GM12878 (cell line): ENCODE measurements at regions of chr3 and their contacts with region 1.

Region 1: GRCh38 chr3:88113311-88114162 is 36.2 kb upstream of the C3orf38 start:
- DNase-seq: peak; percentile 35
- ATAC-seq: peak; percentile 99
- H3K4me3 ChIP-seq: no peak overlapping the region
- H3K27ac ChIP-seq: no peak overlapping the region
- H3K4me1 ChIP-seq: no peaks in the 10 kb centered on the region
- H3K27me3 ChIP-seq: no peaks in the 10 kb centered on the region
- CTCF ChIP-seq: peak; percentile 67 to 72 (median 69)
- EP300 ChIP-seq: no peak
- POLR2A ChIP-seq: no peak
- RAD21 ChIP-seq: peak; percentile 77

Region 2: DNA sequence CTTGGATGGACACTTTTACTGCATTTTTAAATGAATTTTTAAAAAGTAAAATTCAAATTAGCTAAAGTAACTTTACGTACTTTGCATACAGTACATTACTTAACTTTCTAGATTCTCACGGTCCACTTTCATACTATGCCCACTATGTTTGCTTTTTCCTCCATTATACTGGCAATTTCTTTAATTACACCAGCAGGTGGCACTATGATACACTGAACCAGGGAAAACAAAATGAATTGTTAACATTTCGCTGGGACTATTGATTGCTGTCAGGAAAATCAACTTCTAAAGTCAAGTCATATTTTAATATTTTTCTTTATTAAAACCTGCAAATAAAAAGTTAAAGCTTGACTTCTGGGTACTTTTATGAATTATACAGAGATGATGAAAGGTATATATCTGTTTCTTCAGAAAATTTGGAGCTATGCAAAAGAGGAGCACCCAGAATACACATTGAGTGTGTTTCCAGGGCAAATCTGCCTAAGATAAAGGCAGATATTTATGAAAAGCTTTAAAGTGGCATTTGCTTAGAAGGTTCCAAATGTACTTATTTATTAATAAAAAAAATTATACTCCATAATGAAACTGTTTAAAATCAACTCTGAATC is 815.3 kb before region 1 on chr3:
- CTCF ChIA-PET with region 1: interaction called, 12 read pairs
- POLR2A ChIA-PET with region 1: no interaction called
- RAD21 ChIA-PET with region 1: no interaction called
- SMC1A ChIA-PET with region 1: interaction called, 3 read pairs
- in situ Hi-C with region 1: no loop called
- intact Hi-C with region 1: loop called (anchors 5 kb)
- DNase-seq: no peak
- ATAC-seq: peak; percentile 88
- H3K4me3 ChIP-seq: no peak overlapping the region
- H3K27ac ChIP-seq: no peak overlapping the region
- H3K4me1 ChIP-seq: no peaks in the 10 kb centered on the region
- H3K27me3 ChIP-seq: no peaks in the 10 kb centered on the region
- CTCF ChIP-seq: peak; percentile 52 to 59 (median 58); a peak in 5 of 6 replicates
- EP300 ChIP-seq: no peak
- POLR2A ChIP-seq: no peak
- RAD21 ChIP-seq: peak; percentile 67

Region 3: GRCh38 chr3:87855616-87856015 is 257.9 kb before region 1 on chr3:
- CTCF ChIA-PET with region 1: no interaction called
- POLR2A ChIA-PET with region 1: no interaction called
- RAD21 ChIA-PET with region 1: no interaction called
- SMC1A ChIA-PET with region 1: no interaction called
- in situ Hi-C with region 1: no loop called
- intact Hi-C with region 1: no loop called
- DNase-seq: no peak
- ATAC-seq: no peak
- H3K4me3 ChIP-seq: no peak overlapping the region
- H3K27ac ChIP-seq: no peak overlapping the region
- H3K4me1 ChIP-seq: no peaks in the 10 kb centered on the region
- H3K27me3 ChIP-seq: no peaks in the 10 kb centered on the region
- CTCF ChIP-seq: no peak
- EP300 ChIP-seq: no peak
- POLR2A ChIP-seq: no peak
- RAD21 ChIP-seq: no peak

Region 4: DNA sequence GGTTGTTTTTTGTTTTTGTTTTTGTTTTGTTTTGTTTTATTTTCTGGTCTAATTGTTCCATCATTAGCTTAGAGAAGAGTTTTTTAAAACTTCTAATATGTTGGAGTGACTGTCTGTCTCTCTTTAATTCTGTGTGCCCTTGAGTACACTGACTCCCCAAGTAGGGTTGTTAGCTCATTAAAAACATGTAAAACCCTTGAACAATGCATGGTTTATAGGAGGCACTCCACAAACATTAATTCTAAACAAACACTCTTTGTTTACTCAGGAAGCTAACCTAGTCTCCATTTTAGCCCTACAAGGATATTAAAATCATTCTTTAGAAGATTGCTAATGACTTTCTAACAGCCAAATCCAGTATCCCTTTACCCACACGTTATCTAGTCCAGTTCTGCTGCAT is 155.2 kb before region 1 on chr3:
- CTCF ChIA-PET with region 1: no interaction called
- POLR2A ChIA-PET with region 1: no interaction called
- RAD21 ChIA-PET with region 1: no interaction called
- SMC1A ChIA-PET with region 1: no interaction called
- in situ Hi-C with region 1: no loop called
- intact Hi-C with region 1: no loop called
- DNase-seq: no peak
- ATAC-seq: no peak
- H3K4me3 ChIP-seq: no peak overlapping the region
- H3K27ac ChIP-seq: no peak overlapping the region
- H3K4me1 ChIP-seq: no peaks in the 10 kb centered on the region
- H3K27me3 ChIP-seq: no peaks in the 10 kb centered on the region
- CTCF ChIP-seq: no peak
- EP300 ChIP-seq: no peak
- POLR2A ChIP-seq: no peak
- RAD21 ChIP-seq: no peak

Region 5: GRCh38 chr3:88003115-88003755 is 110.3 kb before region 1 on chr3:
- CTCF ChIA-PET with region 1: interaction called, 44 read pairs
- POLR2A ChIA-PET with region 1: no interaction called
- RAD21 ChIA-PET with region 1: interaction called, 24 read pairs
- SMC1A ChIA-PET with region 1: interaction called, 28 read pairs
- in situ Hi-C with region 1: no loop called
- intact Hi-C with region 1: loop called (anchors 2 kb)
- DNase-seq: no peak
- ATAC-seq: peak; percentile 67
- H3K4me3 ChIP-seq: no peak overlapping the region
- H3K27ac ChIP-seq: no peak overlapping the region
- H3K4me1 ChIP-seq: no peaks in the 10 kb centered on the region
- H3K27me3 ChIP-seq: no peaks in the 10 kb centered on the region
- CTCF ChIP-seq: peak; percentile 58 to 76 (median 59); a peak in 5 of 6 replicates
- EP300 ChIP-seq: no peak
- POLR2A ChIP-seq: no peak
- RAD21 ChIP-seq: peak; percentile 86

Region 6: DNA sequence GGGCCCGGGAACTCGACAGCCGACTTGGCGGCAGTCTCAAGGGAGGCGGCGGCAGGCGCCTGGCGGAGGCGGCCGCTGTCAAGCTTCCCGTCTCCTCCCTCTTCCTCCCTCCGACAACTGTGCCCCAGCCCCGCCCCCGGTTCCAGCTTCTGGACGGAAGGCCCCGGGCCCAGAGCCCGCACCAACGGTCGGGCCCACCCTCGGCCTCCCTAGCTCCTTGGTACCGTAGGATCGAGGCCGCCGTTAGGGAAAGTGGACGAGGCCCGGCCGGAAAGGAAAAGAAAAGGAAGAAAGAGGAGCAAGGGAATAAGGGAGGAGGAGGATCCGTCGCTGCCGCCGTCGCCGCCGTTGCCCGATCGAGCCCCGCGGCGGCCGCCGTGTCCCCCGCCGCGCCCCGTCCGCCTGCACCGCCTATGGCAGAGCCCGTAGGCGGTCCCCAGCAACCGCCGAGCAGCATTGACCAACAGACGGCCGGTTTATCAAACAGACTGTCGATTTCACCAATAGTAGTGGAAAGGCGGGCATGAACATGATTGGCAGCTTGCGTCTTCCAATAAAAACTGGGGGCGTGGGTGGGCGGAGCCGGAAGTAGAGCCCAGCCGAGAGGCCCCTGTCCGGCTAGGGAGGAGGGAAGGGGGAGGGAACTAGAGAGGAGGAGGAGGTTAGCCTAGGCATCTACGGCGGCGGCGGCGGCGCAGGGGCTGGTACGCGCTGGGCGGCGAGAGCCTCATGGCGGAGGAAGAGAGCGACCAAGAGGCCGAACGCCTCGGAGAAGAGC is 54.8 kb before region 1 on chr3 and contains the starts of genes CGGBP1 and ZNF654:
- CTCF ChIA-PET with region 1: interaction called, 19 read pairs
- POLR2A ChIA-PET with region 1: no interaction called
- RAD21 ChIA-PET with region 1: interaction called, 7 read pairs
- SMC1A ChIA-PET with region 1: interaction called, 10 read pairs
- in situ Hi-C with region 1: no loop called
- intact Hi-C with region 1: no loop called
- DNase-seq: peak; percentile 95
- ATAC-seq: peak; percentile 93
- H3K4me3 ChIP-seq: peak within 1 kb of the TSS; percentile 94
- H3K27ac ChIP-seq: peak within 1 kb of the TSS; percentile 86
- H3K4me1 ChIP-seq: peaks cover 2% of the 10 kb centered on the region; the same call in 1 of the 2 replicates
- H3K27me3 ChIP-seq: no peaks in the 10 kb centered on the region
- CTCF ChIP-seq: no peak
- EP300 ChIP-seq: no peak
- POLR2A ChIP-seq: peak; percentile 85
- RAD21 ChIP-seq: no peak
- polyA plus RNA-seq, gene CGGBP1: 27.8 to 30.0 TPM
- polyA plus RNA-seq, gene ZNF654: 2.7 to 2.8 TPM

Region 7: DNA sequence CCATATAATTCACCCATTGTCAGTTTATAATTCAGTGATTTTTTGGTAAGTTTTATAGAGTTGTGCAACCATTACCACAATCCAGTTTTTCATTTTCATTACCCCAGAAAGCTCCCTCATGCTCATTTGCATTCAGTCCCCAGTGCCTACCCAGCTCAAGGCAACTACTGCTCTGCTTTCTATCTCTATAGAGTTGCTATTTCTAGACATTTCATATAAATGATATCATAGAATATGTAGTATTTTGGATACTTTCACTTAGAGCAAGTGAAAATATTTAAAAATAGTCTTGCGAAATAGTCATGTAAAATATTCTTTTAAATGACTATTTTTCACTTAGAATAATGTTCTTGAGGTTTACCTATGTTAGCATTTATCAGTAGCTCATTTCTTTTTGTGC is 12.4 kb before region 1 on chr3:
- CTCF ChIA-PET with region 1: interaction called, 21 read pairs
- POLR2A ChIA-PET with region 1: no interaction called
- RAD21 ChIA-PET with region 1: interaction called, 4 read pairs
- SMC1A ChIA-PET with region 1: interaction called, 8 read pairs
- in situ Hi-C with region 1: no loop called
- intact Hi-C with region 1: no loop called
- DNase-seq: no peak
- ATAC-seq: peak; percentile 74
- H3K4me3 ChIP-seq: no peak overlapping the region
- H3K27ac ChIP-seq: no peak overlapping the region
- H3K4me1 ChIP-seq: no peaks in the 10 kb centered on the region
- H3K27me3 ChIP-seq: no peaks in the 10 kb centered on the region
- CTCF ChIP-seq: no peak
- EP300 ChIP-seq: no peak
- POLR2A ChIP-seq: no peak
- RAD21 ChIP-seq: no peak

Region 8: GRCh38 chr3:88180398-88180999 is 67.0 kb after region 1 on chr3:
- CTCF ChIA-PET with region 1: interaction called, 5 read pairs
- POLR2A ChIA-PET with region 1: no interaction called
- RAD21 ChIA-PET with region 1: interaction called, 6 read pairs
- SMC1A ChIA-PET with region 1: no interaction called
- in situ Hi-C with region 1: no loop called
- intact Hi-C with region 1: loop called (anchors 5 kb)
- DNase-seq: peak; percentile 27
- ATAC-seq: peak; percentile 89
- H3K4me3 ChIP-seq: no peak overlapping the region
- H3K27ac ChIP-seq: no peak overlapping the region
- H3K4me1 ChIP-seq: no peaks in the 10 kb centered on the region
- H3K27me3 ChIP-seq: no peaks in the 10 kb centered on the region; a peak in 1 of 4 replicates
- CTCF ChIP-seq: peak; percentile 58 to 69 (median 64)
- EP300 ChIP-seq: no peak
- POLR2A ChIP-seq: no peak
- RAD21 ChIP-seq: peak; percentile 84

Region 9: DNA sequence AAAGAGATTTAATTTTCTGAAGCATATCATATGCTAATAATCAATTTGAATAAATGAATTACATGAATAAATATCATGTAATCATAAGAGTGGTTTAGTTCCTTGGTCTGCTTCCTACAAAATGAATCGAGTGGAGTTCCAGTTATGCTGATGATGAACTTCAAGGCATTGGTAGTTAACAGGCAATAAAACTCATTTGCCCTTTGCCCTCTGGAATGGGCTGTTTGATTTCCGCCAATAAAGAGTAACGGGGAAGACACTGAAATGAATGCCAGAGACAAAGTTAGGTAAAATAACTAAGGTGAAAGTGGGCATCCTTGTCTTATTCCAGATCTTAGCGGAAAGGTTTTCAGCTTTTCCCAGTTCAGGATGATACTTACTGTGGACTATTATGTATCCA is 126.3 kb after region 1 on chr3:
- CTCF ChIA-PET with region 1: no interaction called
- POLR2A ChIA-PET with region 1: no interaction called
- RAD21 ChIA-PET with region 1: no interaction called
- SMC1A ChIA-PET with region 1: no interaction called
- in situ Hi-C with region 1: no loop called
- intact Hi-C with region 1: no loop called
- DNase-seq: no peak
- ATAC-seq: no peak
- H3K4me3 ChIP-seq: no peak overlapping the region
- H3K27ac ChIP-seq: no peak overlapping the region
- H3K4me1 ChIP-seq: no peaks in the 10 kb centered on the region
- H3K27me3 ChIP-seq: no peaks in the 10 kb centered on the region
- CTCF ChIP-seq: no peak
- EP300 ChIP-seq: no peak
- POLR2A ChIP-seq: no peak
- RAD21 ChIP-seq: no peak

Region 10: DNA sequence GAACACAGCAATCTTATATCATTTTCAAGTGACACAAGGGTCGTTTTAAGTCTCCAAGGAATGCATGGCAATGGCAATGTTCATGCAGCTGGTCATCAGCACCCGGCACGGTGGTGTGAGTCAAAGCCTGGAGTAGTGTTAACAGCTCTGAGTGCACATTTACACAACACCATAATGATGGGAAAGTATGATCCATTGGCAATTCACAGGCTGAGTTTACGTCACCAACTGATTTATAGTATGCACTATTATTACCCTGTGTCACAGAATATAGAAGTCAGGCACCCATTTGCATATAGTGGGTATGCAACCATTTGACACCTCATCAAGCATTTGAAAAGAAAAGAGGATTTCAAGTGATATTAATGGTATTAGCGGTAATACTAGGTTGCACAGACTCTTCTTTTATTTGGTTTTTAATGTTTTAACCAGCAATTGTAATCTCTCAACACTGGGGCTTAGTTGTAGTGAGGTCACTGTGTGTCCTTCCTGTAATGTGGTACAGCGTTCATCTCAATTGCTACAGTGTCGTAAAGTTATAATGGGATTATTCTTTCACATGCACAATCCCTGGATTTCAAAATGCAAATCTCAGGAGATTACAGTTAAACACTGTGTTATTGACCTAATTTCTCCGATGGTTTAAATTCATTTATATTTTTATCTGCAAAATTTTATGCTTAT is 150.0 kb after region 1 on chr3:
- CTCF ChIA-PET with region 1: no interaction called
- POLR2A ChIA-PET with region 1: no interaction called
- RAD21 ChIA-PET with region 1: no interaction called
- SMC1A ChIA-PET with region 1: no interaction called
- in situ Hi-C with region 1: no loop called
- intact Hi-C with region 1: no loop called
- DNase-seq: no peak
- ATAC-seq: no peak
- H3K4me3 ChIP-seq: no peak overlapping the region
- H3K27ac ChIP-seq: no peak overlapping the region
- H3K4me1 ChIP-seq: no peaks in the 10 kb centered on the region
- H3K27me3 ChIP-seq: no peaks in the 10 kb centered on the region
- CTCF ChIP-seq: no peak
- EP300 ChIP-seq: no peak
- POLR2A ChIP-seq: no peak
- RAD21 ChIP-seq: no peak